Naive thymus-derived CD4-positive, alpha-beta T cell (primary cell): ENCODE measurements at regions of chr19 and their contacts with region 1.

Region 1: GRCh38 chr19:44954824-44955586 is at the start of gene CLPTM1:
- DNase-seq: peak; percentile 85 to 96 (median 94)
- ATAC-seq: peak; percentile 97
- H3K4me3 ChIP-seq: peak within 1 kb of the TSS; percentile 92
- H3K4me3 Mint-ChIP-seq: peak within 1 kb of the TSS; percentile 90 to 99 (median 98)
- H3K27ac ChIP-seq: peak within 1 kb of the TSS; percentile 92
- H3K27ac Mint-ChIP-seq: peak within 1 kb of the TSS; percentile 97 to 99 (median 98)
- H3K4me1 ChIP-seq: peaks cover 12 to 24% of the 10 kb centered on the region in 2 donors
- H3K4me1 Mint-ChIP-seq: peaks cover 27 to 63% (median 56%) of the 10 kb centered on the region in 7 donors
- H3K27me3 ChIP-seq: no peaks in the 10 kb centered on the region
- H3K27me3 Mint-ChIP-seq: no peaks in the 10 kb centered on the region
- total RNA-seq, gene CLPTM1: 68.4 to 83.3 (median 76.8) TPM

Region 2: GRCh38 chr19:44689056-44689895 is 265.7 kb before region 1 on chr19:
- CTCF ChIA-PET with region 1: interaction called, 5 read pairs
- POLR2A ChIA-PET with region 1: no interaction called
- intact Hi-C with region 1: loop called (anchors 1 to 5 kb)
- DNase-seq: peak; percentile 42 to 79 (median 69)
- ATAC-seq: peak; percentile 63
- H3K4me3 ChIP-seq: no peak overlapping the region
- H3K4me3 Mint-ChIP-seq: peak overlapping the region in 1 of 10 donors; percentile 20
- H3K27ac ChIP-seq: no peak overlapping the region
- H3K27ac Mint-ChIP-seq: peak overlapping the region in 4 of 9 donors; percentile 45 to 74 (median 62)
- H3K4me1 ChIP-seq: peaks cover 0 to 21% of the 10 kb centered on the region in 2 donors
- H3K4me1 Mint-ChIP-seq: peaks cover 25 to 43% (median 32%) of the 10 kb centered on the region in 7 donors
- H3K27me3 ChIP-seq: no peaks in the 10 kb centered on the region
- H3K27me3 Mint-ChIP-seq: peaks cover 5 to 19% (median 9%) of the 10 kb centered on the region in 5 donors

Region 3: GRCh38 chr19:44845612-44846454 is 109.2 kb before region 1 on chr19 and contains the start of gene NECTIN2:
- CTCF ChIA-PET with region 1: no interaction called
- POLR2A ChIA-PET with region 1: no interaction called
- intact Hi-C with region 1: loop called in 1 of 2 experiments (anchors 2 kb)
- DNase-seq: peak; percentile 47 to 95 (median 69)
- ATAC-seq: peak; percentile 85
- H3K4me3 ChIP-seq: peak within 1 kb of the TSS; percentile 57
- H3K4me3 Mint-ChIP-seq: peak within 1 kb of the TSS; percentile 82 to 98 (median 89)
- H3K27ac ChIP-seq: peak within 1 kb of the TSS; percentile 58
- H3K27ac Mint-ChIP-seq: peak within 1 kb of the TSS in 8 of 9 donors; percentile 61 to 92 (median 79)
- H3K4me1 ChIP-seq: peaks cover 18 to 19% of the 10 kb centered on the region in 2 donors
- H3K4me1 Mint-ChIP-seq: peaks cover 18 to 38% (median 29%) of the 10 kb centered on the region in 7 donors
- H3K27me3 ChIP-seq: peaks cover 0 to 5% of the 10 kb centered on the region in 2 donors
- H3K27me3 Mint-ChIP-seq: peaks cover 0 to 46% (median 9%) of the 10 kb centered on the region in 5 donors
- total RNA-seq, gene NECTIN2: 0.17 to 9.2 (median 1.2) TPM

Region 4: DNA sequence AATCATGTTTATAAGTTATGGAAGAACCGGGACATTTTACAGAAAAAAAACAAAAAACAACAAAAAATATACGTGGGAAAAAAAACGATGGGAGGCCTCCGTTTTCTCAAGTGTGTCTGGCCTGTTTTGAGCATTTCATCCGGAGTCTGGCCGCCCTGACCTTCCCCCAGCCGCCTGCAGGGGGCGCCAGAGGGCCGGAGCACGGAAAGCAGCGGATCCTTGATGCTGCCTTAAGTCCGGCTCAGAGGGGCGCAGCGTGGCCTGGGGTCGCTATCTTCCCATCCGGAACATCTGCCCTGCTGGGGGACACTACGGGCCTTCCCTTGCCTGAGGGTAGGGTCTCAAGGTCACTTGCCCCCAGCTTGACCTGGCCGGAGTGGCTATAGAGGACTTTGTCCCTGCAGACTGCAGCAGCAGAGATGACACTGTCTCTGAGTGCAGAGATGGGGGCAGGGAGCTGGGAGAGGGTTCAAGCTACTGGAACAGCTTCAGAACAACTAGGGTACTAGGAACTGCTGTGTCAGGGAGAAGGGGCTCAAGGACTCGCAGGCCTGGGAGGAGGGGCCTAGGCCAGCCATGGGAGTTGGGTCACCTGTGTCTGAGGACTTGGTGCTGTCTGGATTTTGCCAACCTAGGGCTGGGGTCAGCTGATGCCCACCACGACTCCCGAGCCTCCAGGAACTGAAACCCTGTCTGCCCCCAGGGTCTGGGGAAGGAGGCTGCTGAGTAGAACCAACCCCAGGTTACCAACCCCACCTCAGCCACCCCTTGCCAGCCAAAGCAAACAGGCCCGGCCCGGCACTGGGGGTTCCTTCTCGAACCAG is 51.2 kb before region 1 on chr19:
- CTCF ChIA-PET with region 1: interaction called, 5 read pairs
- POLR2A ChIA-PET with region 1: interaction called, 4 read pairs
- intact Hi-C with region 1: loop called (anchors 1 kb)
- DNase-seq: peak; percentile 49 to 86 (median 70)
- ATAC-seq: peak; percentile 81
- H3K4me3 ChIP-seq: no peak overlapping the region
- H3K4me3 Mint-ChIP-seq: no peak overlapping the region
- H3K27ac ChIP-seq: no peak overlapping the region
- H3K27ac Mint-ChIP-seq: peak overlapping the region in 2 of 9 donors; percentile 19 to 49
- H3K4me1 ChIP-seq: no peaks in the 10 kb centered on the region
- H3K4me1 Mint-ChIP-seq: peaks cover 5 to 13% (median 10%) of the 10 kb centered on the region in 7 donors
- H3K27me3 ChIP-seq: peaks cover 0 to 4% of the 10 kb centered on the region in 2 donors
- H3K27me3 Mint-ChIP-seq: peaks cover 18 to 22% (median 20%) of the 10 kb centered on the region in 5 donors

Region 5: GRCh38 chr19:45001087-45001739 is 46.2 kb after region 1 on chr19 and contains the start of gene RELB:
- CTCF ChIA-PET with region 1: interaction called, 3 read pairs
- POLR2A ChIA-PET with region 1: interaction called, 6 read pairs
- intact Hi-C with region 1: loop called (anchors 1 kb)
- DNase-seq: peak; percentile 90 to 100 (median 94)
- ATAC-seq: peak; percentile 75
- H3K4me3 ChIP-seq: peak within 1 kb of the TSS; percentile 92
- H3K4me3 Mint-ChIP-seq: peak within 1 kb of the TSS; percentile 91 to 100 (median 96)
- H3K27ac ChIP-seq: peak within 1 kb of the TSS; percentile 100
- H3K27ac Mint-ChIP-seq: peak within 1 kb of the TSS; percentile 93 to 100 (median 100)
- H3K4me1 ChIP-seq: peaks cover 8 to 13% of the 10 kb centered on the region in 2 donors
- H3K4me1 Mint-ChIP-seq: peaks cover 8 to 25% (median 14%) of the 10 kb centered on the region in 7 donors
- H3K27me3 ChIP-seq: no peaks in the 10 kb centered on the region
- H3K27me3 Mint-ChIP-seq: no peaks in the 10 kb centered on the region
- total RNA-seq, gene RELB: 30.7 to 87.3 (median 71.3) TPM

Region 6: GRCh38 chr19:45092747-45093678 is 138.0 kb after region 1 on chr19 and contains the start of gene PPP1R37:
- CTCF ChIA-PET with region 1: interaction called, 3 read pairs
- POLR2A ChIA-PET with region 1: interaction called, 8 read pairs
- intact Hi-C with region 1: loop called in 1 of 2 experiments (anchors 1 kb)
- DNase-seq: peak; percentile 81 to 97 (median 92)
- ATAC-seq: peak; percentile 85
- H3K4me3 ChIP-seq: peak within 1 kb of the TSS; percentile 75
- H3K4me3 Mint-ChIP-seq: peak within 1 kb of the TSS; percentile 87 to 99 (median 96)
- H3K27ac ChIP-seq: peak within 1 kb of the TSS; percentile 90
- H3K27ac Mint-ChIP-seq: peak within 1 kb of the TSS; percentile 96 to 100 (median 98)
- H3K4me1 ChIP-seq: peaks cover 33 to 46% of the 10 kb centered on the region in 2 donors
- H3K4me1 Mint-ChIP-seq: peaks cover 56 to 81% (median 60%) of the 10 kb centered on the region in 7 donors
- H3K27me3 ChIP-seq: no peaks in the 10 kb centered on the region
- H3K27me3 Mint-ChIP-seq: no peaks in the 10 kb centered on the region
- total RNA-seq, gene PPP1R37: 20.0 to 28.3 (median 21.9) TPM